Activated naive CD4-positive, alpha-beta T cell treated with anti-CD3 and anti-CD28 coated beads, Interleukin-2, amount 10 ng/mL, durations not matched to agents 7 days and 5 days (primary cell): ENCODE measurements at regions of chr3 and their contacts with region 1.

Region 1: DNA sequence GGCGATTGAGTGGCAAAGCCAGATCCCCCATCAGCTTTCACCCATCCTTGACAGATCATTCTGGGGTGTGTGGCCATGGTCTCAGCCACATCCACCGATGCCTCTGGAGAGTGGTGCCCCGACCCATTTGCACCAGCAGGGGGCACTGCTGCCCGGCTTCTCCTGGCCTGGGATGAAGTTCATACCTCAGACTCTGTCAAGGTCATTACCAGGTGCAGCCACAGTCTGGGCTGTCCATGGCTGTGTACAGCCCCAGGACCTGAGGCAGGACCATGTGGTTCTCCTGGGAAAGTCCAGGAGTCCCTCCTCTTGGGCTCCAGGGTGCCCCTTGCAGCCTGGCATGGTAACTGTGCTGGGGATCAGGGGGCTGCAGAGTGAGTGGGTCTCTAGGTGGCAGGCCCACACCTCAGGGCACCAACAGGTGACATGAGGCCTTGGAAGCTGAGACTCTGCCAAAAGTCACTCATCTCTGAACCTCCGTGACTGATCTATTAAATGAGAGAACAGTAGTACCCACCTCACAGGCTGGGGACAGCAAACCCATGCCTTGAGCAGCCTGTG is 67.2 kb downstream of the CACNA2D2 start:
- DNase-seq: peak; percentile 88
- H3K4me3 Mint-ChIP-seq: no peak overlapping the region
- H3K27ac Mint-ChIP-seq: no peak overlapping the region
- H3K4me1 Mint-ChIP-seq: no peaks in the 10 kb centered on the region
- H3K27me3 Mint-ChIP-seq: peaks cover 50% of the 10 kb centered on the region

Region 2: DNA sequence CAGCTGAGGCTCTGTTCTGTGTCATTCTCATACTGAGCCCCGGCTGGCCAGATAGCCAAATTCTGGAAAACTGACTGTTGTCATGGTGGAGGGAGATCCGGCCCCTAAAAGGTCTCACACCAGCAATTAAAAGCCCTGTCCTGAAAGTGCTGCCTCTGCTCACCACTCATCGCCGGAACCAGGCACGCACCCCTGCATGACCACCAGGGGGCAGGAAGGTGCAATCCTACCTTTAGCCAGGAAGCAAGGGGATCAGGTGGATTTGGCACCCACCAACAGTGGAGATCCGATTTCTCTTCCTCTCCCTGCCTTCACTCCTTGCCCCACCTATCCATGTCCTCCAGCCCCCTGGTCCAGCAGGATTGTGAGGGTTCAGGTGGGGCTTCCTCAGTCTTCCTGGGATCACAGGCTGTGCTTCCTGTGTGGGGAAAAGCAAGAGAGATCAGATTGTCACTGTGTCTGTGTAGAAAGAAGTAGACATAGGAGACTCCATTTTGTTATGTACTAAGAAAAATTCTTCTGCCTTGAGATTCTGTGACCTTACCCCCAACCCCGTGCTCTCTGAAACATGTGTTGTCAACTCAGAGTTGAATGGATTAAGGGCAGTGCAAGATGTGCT is 83.4 kb after region 1 on chr3:
- CTCF ChIA-PET with region 1: no interaction called
- DNase-seq: peak; percentile 87
- H3K4me3 Mint-ChIP-seq: no peak overlapping the region
- H3K27ac Mint-ChIP-seq: no peak overlapping the region
- H3K4me1 Mint-ChIP-seq: peaks cover 6% of the 10 kb centered on the region
- H3K27me3 Mint-ChIP-seq: peaks cover 74% of the 10 kb centered on the region

Region 3: DNA sequence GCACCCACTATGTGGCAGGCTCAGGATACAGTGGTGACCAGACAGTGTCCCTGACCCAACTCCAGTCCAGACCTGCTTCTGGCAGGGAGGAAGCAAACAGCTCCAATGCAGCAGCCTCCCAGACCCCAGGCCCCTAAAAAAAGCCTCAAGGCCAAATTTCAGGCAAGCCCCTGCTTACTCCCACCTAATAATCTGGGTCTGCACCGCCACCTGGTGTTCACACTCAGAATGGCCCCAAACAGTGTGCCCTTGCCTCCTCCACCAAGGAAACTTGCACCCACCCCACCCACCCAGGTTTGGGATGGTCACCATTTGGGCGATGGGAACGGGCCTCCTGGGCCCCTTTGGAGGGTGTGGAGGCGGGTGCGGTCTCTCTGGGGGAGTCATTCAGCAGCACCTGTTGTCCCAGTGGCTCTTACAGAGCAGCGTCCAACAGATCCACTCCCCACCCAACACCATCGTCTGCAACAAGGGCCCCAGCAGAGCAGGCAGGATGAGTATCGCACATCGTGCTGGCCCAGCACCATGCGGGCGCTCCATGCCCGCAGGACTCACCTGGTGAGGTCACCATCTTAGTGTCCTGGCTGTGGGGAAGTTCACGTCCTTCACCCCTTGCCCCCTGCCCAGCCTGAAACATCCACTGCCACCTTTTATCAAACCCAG is 114.0 kb after region 1 on chr3:
- CTCF ChIA-PET with region 1: interaction called, 90 read pairs
- DNase-seq: peak; percentile 79
- H3K4me3 Mint-ChIP-seq: no peak overlapping the region
- H3K27ac Mint-ChIP-seq: no peak overlapping the region
- H3K4me1 Mint-ChIP-seq: peaks cover 9% of the 10 kb centered on the region
- H3K27me3 Mint-ChIP-seq: peaks cover 46% of the 10 kb centered on the region

Region 4: DNA sequence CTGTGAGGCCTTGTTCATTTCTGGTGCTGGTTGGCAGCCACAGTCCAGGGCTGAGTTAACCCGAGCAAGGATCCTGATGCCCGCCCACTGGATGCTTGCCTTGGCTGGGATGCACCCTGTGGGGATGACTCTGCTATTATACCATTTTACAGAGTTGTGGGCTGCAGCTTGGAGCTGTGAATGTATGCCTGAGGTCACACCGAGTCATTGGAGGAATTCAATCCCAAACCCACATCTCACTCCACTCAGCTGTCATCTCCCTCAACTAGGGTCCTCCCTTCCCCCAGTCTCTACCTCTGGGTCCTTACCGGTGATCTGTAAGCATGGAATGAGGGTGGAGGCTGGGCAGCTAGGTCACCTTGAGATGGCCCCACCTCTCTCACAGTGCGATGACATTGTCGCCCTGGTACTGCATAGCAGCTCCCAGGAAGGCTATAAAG is 202.9 kb after region 1 on chr3:
- CTCF ChIA-PET with region 1: no interaction called
- DNase-seq: no peak
- H3K4me3 Mint-ChIP-seq: no peak overlapping the region
- H3K27ac Mint-ChIP-seq: peak overlapping the region; percentile 19
- H3K4me1 Mint-ChIP-seq: peaks cover 41% of the 10 kb centered on the region
- H3K27me3 Mint-ChIP-seq: no peaks in the 10 kb centered on the region